Activated CD4-positive, alpha-beta memory T cell treated with anti-CD3 and anti-CD28 coated beads for 36 hours (primary cell): ENCODE measurements at regions of chr1 and their contacts with region 1.

Region 1: GRCh38 chr1:161132410-161133219 is at the start of gene DEDD:
- DNase-seq: peak; percentile 96
- H3K4me3 Mint-ChIP-seq: no peak within 1 kb of the TSS
- H3K27ac Mint-ChIP-seq: no peak within 1 kb of the TSS
- H3K4me1 Mint-ChIP-seq: peaks cover 43% of the 10 kb centered on the region
- H3K27me3 Mint-ChIP-seq: no peaks in the 10 kb centered on the region
- total RNA-seq, gene DEDD: 35.0 to 40.2 TPM

Region 2: GRCh38 chr1:160877221-160877620 is 255.4 kb before region 1 on chr1:
- CTCF ChIA-PET with region 1: no interaction called
- POLR2A ChIA-PET with region 1: no interaction called
- intact Hi-C with region 1: no loop called
- DNase-seq: no peak
- H3K4me3 Mint-ChIP-seq: no peak overlapping the region
- H3K27ac Mint-ChIP-seq: no peak overlapping the region
- H3K4me1 Mint-ChIP-seq: peaks cover 15% of the 10 kb centered on the region
- H3K27me3 Mint-ChIP-seq: no peaks in the 10 kb centered on the region

Region 3: GRCh38 chr1:161153679-161154426 is 21.2 kb after region 1 on chr1 and contains the start of gene UFC1:
- CTCF ChIA-PET with region 1: interaction called, 4 read pairs
- POLR2A ChIA-PET with region 1: interaction called, 10 read pairs
- intact Hi-C with region 1: loop called (anchors 1 kb)
- DNase-seq: peak; percentile 88
- H3K4me3 Mint-ChIP-seq: peak within 1 kb of the TSS; percentile 86
- H3K27ac Mint-ChIP-seq: peak within 1 kb of the TSS; percentile 97
- H3K4me1 Mint-ChIP-seq: peaks cover 20% of the 10 kb centered on the region
- H3K27me3 Mint-ChIP-seq: no peaks in the 10 kb centered on the region
- total RNA-seq, gene UFC1: 87.7 to 91.0 TPM